GM10248 (cell line): ENCODE measurements at regions of chr16 and their contacts with region 1.

Region 1: GRCh38 chr16:11597239-11598101 is 10.8 kb upstream of the LITAF start:
- DNase-seq: no peak
- CTCF ChIP-seq: no peak

Region 2: GRCh38 chr16:11613381-11614303 is 16.2 kb after region 1 on chr16:
- CTCF ChIA-PET with region 1: interaction called, 18 read pairs
- POLR2A ChIA-PET with region 1: interaction called, 5 read pairs
- DNase-seq: peak; percentile 62
- CTCF ChIP-seq: no peak